ENCODE measurements at regions of chr22 and their contacts with region 1.

Region 1: DNA sequence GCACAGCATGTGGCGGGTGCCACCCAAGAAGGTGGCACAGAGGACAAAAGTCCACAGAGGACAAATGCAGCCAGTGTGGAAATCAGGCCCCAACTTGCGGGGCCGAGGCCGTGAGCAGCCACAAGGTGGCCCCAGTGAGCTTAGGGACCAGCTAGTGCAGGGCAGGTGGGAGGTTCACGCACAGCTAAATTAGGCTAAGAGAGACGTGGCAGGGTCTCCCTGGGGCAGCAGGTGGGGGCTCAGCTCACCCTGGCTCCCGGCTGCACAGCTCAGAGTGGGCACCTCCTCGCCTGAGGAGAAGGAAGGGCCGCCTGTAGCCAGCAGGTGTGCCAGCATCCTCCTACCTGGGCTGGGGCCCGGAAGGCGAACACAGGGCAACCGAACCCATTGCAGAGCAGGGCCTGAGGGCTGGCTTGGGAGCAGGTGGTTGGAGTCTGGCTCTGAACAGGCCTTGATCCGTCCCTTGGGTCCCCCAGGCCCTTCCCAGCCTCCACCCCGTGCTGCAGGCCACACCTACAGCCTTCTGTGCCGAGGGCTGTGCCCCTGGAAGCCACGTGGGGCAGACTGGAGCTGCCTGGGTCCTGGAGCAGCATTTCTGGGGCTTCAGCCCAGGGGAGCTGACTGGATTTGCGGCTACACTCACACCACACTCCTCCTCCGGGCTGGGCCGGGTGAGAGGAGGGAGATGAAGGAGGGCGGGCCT is 26.1 kb upstream of the CELSR1 start:
- DNase-seq: peak; percentile 87
- ATAC-seq: peak; percentile 86
- H3K4me3 ChIP-seq: peak overlapping the region in 2 of 5 experiments; percentile 29 to 47
- H3K4me3 Mint-ChIP-seq: peak overlapping the region; percentile 72
- H3K27ac ChIP-seq: no peak overlapping the region
- H3K27ac Mint-ChIP-seq: peak overlapping the region; percentile 47
- H3K4me1 ChIP-seq: peaks cover 7 to 24% of the 10 kb centered on the region in 2 donors
- H3K4me1 Mint-ChIP-seq: peaks cover 19% of the 10 kb centered on the region
- H3K27me3 ChIP-seq: no peaks in the 10 kb centered on the region
- H3K27me3 Mint-ChIP-seq: no peaks in the 10 kb centered on the region
- CTCF ChIP-seq: peak; percentile 74

Region 2: GRCh38 chr22:46592390-46592872 is 28.9 kb after region 1 on chr22:
- CTCF ChIA-PET with region 1: interaction called, 16 read pairs
- POLR2A ChIA-PET with region 1: interaction called, 9 read pairs
- intact Hi-C with region 1: loop called (anchors 1 kb)
- DNase-seq: peak; percentile 80
- ATAC-seq: peak; percentile 37
- H3K4me3 ChIP-seq: peak overlapping the region; percentile 5 to 78 (median 51)
- H3K4me3 Mint-ChIP-seq: peak overlapping the region; percentile 92
- H3K27ac ChIP-seq: peak overlapping the region; percentile 70 to 75
- H3K27ac Mint-ChIP-seq: peak overlapping the region; percentile 93
- H3K4me1 ChIP-seq: peaks cover 52 to 81% of the 10 kb centered on the region in 2 donors
- H3K4me1 Mint-ChIP-seq: peaks cover 62% of the 10 kb centered on the region
- H3K27me3 ChIP-seq: no peaks in the 10 kb centered on the region
- H3K27me3 Mint-ChIP-seq: no peaks in the 10 kb centered on the region
- CTCF ChIP-seq: no peak

Region 3: DNA sequence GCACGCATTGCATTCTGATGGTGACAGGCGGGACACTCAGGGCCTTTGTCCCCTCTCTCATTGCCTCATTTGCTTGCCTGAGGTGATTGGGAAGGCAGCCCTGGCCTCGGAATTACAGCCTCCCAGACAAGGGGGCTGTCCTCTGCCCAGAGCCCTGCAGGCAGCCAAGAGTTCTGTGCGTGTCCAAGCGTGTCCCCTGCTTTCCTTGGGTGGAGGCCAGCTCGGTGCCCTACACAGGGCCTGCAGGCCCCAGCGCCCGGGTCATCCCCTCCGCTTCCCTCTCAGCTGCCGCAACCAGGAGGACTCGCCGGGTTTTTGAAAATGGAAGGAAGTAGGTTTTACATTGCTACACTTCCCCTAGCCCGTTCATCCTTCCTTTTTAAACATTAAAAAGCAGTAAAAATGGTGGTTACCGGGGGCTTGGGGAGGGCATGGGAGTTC is 58.6 kb after region 1 on chr22:
- CTCF ChIA-PET with region 1: interaction called, 21 read pairs
- POLR2A ChIA-PET with region 1: no interaction called
- intact Hi-C with region 1: loop called (anchors 2 kb)
- DNase-seq: peak; percentile 28
- ATAC-seq: no peak
- H3K4me3 ChIP-seq: no peak overlapping the region
- H3K4me3 Mint-ChIP-seq: peak overlapping the region; percentile 67
- H3K27ac ChIP-seq: no peak overlapping the region
- H3K27ac Mint-ChIP-seq: peak overlapping the region; percentile 67
- H3K4me1 ChIP-seq: peaks cover 20 to 50% of the 10 kb centered on the region in 2 donors
- H3K4me1 Mint-ChIP-seq: peaks cover 58% of the 10 kb centered on the region
- H3K27me3 ChIP-seq: no peaks in the 10 kb centered on the region
- H3K27me3 Mint-ChIP-seq: no peaks in the 10 kb centered on the region
- CTCF ChIP-seq: no peak

Region 4: GRCh38 chr22:46674367-46674781 is 110.8 kb after region 1 on chr22:
- CTCF ChIA-PET with region 1: interaction called, 28 read pairs
- POLR2A ChIA-PET with region 1: no interaction called
- intact Hi-C with region 1: no loop called
- DNase-seq: peak; percentile 89
- ATAC-seq: peak; percentile 78
- H3K4me3 ChIP-seq: peak overlapping the region; percentile 2 to 40 (median 27)
- H3K4me3 Mint-ChIP-seq: peak overlapping the region; percentile 93
- H3K27ac ChIP-seq: peak overlapping the region in 1 of 2 donors; percentile 65
- H3K27ac Mint-ChIP-seq: peak overlapping the region; percentile 92
- H3K4me1 ChIP-seq: peaks cover 32 to 39% of the 10 kb centered on the region in 2 donors
- H3K4me1 Mint-ChIP-seq: peaks cover 34% of the 10 kb centered on the region
- H3K27me3 ChIP-seq: peaks cover 0 to 21% (median 0%) of the 10 kb centered on the region in 4 experiments
- H3K27me3 Mint-ChIP-seq: no peaks in the 10 kb centered on the region
- CTCF ChIP-seq: no peak

Region 5: GRCh38 chr22:46693634-46694415 is 130.3 kb after region 1 on chr22:
- CTCF ChIA-PET with region 1: interaction called, 56 read pairs
- POLR2A ChIA-PET with region 1: no interaction called
- intact Hi-C with region 1: no loop called
- DNase-seq: no peak
- ATAC-seq: no peak
- H3K4me3 ChIP-seq: no peak overlapping the region
- H3K4me3 Mint-ChIP-seq: no peak overlapping the region
- H3K27ac ChIP-seq: no peak overlapping the region
- H3K27ac Mint-ChIP-seq: no peak overlapping the region
- H3K4me1 ChIP-seq: no peaks in the 10 kb centered on the region
- H3K4me1 Mint-ChIP-seq: no peaks in the 10 kb centered on the region
- H3K27me3 ChIP-seq: no peaks in the 10 kb centered on the region
- H3K27me3 Mint-ChIP-seq: peaks cover under 1% of the 10 kb centered on the region
- CTCF ChIP-seq: no peak

Region 6: GRCh38 chr22:46762238-46763050 is 198.9 kb after region 1 on chr22 and contains the start of gene TBC1D22A:
- CTCF ChIA-PET with region 1: interaction called, 49 read pairs
- POLR2A ChIA-PET with region 1: interaction called, 3 read pairs
- intact Hi-C with region 1: no loop called
- DNase-seq: peak; percentile 95
- ATAC-seq: peak; percentile 70
- H3K4me3 ChIP-seq: peak within 1 kb of the TSS; percentile 51 to 96 (median 89)
- H3K4me3 Mint-ChIP-seq: peak within 1 kb of the TSS; percentile 96
- H3K27ac ChIP-seq: peak within 1 kb of the TSS; percentile 87 to 93
- H3K27ac Mint-ChIP-seq: peak within 1 kb of the TSS; percentile 99
- H3K4me1 ChIP-seq: peaks cover 48 to 62% of the 10 kb centered on the region in 2 donors
- H3K4me1 Mint-ChIP-seq: peaks cover 59% of the 10 kb centered on the region
- H3K27me3 ChIP-seq: no peaks in the 10 kb centered on the region
- H3K27me3 Mint-ChIP-seq: no peaks in the 10 kb centered on the region
- CTCF ChIP-seq: no peak
- total RNA-seq, gene TBC1D22A: 128 and 141 TPM in 2 replicates

Measured in B cell (primary cell).